A673 (cell line): ENCODE measurements at regions of chr3 and their contacts with region 1.

Region 1: DNA sequence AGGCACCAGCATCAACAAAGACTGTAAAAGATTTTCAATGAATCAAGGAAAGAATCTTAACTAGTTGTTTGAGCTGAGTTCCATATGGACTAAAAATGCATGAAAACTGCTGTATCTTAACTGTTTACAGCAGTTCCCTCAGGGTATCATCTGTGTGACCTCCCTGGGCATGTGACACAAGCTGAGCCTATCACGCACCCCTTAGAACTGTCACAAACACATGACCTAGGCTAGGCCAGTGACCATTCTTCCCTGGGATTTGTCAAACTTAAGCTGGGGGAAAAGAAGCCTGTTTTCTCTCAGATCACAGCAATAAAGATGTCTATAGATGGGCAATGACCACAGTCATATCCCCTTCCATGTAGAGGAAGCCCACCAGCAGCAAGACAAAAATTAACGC is 35.7 kb downstream of the IGF2BP2 start:
- DNase-seq: no peak
- H3K4me3 ChIP-seq: no peak overlapping the region
- H3K27ac ChIP-seq: no peak overlapping the region
- H3K4me1 ChIP-seq: peaks cover 8% of the 10 kb centered on the region
- H3K27me3 ChIP-seq: no peaks in the 10 kb centered on the region
- CTCF ChIP-seq: no peak

Region 2: GRCh38 chr3:185188816-185189215 is 600.3 kb before region 1 on chr3:
- CTCF ChIA-PET with region 1: no interaction called
- POLR2A ChIA-PET with region 1: no interaction called
- intact Hi-C with region 1: no loop called
- DNase-seq: no peak
- H3K4me3 ChIP-seq: no peak overlapping the region
- H3K27ac ChIP-seq: no peak overlapping the region
- H3K4me1 ChIP-seq: no peaks in the 10 kb centered on the region
- H3K27me3 ChIP-seq: no peaks in the 10 kb centered on the region
- CTCF ChIP-seq: no peak

Region 3: DNA sequence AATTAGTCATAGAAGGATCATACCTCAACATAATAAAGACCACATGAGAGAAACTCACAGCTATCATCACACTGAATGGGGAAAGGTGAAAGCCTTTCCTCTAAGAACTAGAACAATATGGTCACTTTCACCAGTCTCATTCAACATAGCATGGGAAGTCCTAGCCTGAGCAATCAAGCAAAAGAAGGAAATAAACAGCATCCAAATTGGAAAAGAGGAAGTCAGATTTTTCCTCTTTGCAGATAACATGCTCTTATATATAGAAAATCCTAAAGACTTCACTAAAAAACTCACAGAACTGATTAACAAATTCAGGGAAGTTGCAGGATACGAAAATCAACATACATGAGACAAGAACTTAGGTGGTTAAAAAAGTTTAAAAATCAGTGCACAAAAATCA is 401.5 kb before region 1 on chr3:
- CTCF ChIA-PET with region 1: no interaction called
- POLR2A ChIA-PET with region 1: no interaction called
- intact Hi-C with region 1: no loop called
- DNase-seq: no peak
- H3K4me3 ChIP-seq: no peak overlapping the region
- H3K27ac ChIP-seq: no peak overlapping the region
- H3K4me1 ChIP-seq: no peaks in the 10 kb centered on the region
- H3K27me3 ChIP-seq: no peaks in the 10 kb centered on the region
- CTCF ChIP-seq: no peak

Region 4: DNA sequence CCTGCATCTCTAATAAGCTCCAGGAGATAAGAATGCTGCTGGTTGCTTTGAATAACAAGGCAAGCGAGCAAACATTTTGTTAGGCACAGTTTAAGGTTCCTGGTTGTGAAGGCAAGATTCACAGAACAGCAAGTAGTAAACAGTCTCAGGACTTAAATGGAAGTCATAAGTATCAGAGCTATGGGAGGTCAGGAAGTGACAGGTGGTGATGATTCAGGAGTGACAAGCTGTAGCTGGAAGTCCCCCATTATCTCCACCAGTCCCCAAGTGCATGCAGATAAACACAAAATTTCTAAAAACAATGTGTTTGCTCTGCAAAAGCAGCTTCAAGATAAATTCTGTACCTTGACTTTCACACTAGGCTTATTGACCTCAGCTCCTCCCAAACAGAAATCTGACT is 854.4 kb after region 1 on chr3:
- CTCF ChIA-PET with region 1: no interaction called
- POLR2A ChIA-PET with region 1: interaction called, 15 read pairs
- intact Hi-C with region 1: no loop called
- DNase-seq: no peak
- H3K4me3 ChIP-seq: no peak overlapping the region
- H3K27ac ChIP-seq: no peak overlapping the region
- H3K4me1 ChIP-seq: no peaks in the 10 kb centered on the region
- H3K27me3 ChIP-seq: no peaks in the 10 kb centered on the region
- CTCF ChIP-seq: no peak